A673 (cell line): ENCODE measurements at regions of chr18 and their contacts with region 1.

Region 1: GRCh38 chr18:24582771-24583170 is 122.3 kb downstream of the HRH4 start:
- DNase-seq: no peak
- H3K4me3 ChIP-seq: no peak overlapping the region
- H3K27ac ChIP-seq: no peak overlapping the region
- H3K4me1 ChIP-seq: no peaks in the 10 kb centered on the region
- H3K27me3 ChIP-seq: peaks cover 81% of the 10 kb centered on the region
- CTCF ChIP-seq: no peak

Region 2: DNA sequence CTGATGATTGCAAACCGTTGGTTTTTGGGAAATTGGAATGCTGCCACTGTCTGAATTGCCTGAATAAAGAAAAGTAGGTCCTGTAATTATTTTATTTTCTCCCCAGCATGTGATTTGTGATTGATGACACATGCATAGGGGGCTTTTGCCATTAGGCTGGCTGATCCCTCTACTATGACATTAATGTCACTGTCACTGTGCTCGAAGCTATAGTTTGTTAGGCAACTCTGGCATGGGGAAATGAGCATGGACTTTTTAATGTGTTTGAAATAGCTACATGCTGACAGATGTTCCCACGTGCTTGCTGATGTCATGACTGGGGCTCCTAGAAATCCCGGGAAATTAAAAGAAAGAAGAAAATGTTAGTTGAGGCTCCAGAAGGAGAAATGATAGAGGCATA is 23.2 kb before region 1 on chr18:
- CTCF ChIA-PET with region 1: no interaction called
- POLR2A ChIA-PET with region 1: no interaction called
- intact Hi-C with region 1: loop called (anchors 2 kb)
- DNase-seq: peak; percentile 40
- H3K4me3 ChIP-seq: no peak overlapping the region
- H3K27ac ChIP-seq: no peak overlapping the region
- H3K4me1 ChIP-seq: no peaks in the 10 kb centered on the region
- H3K27me3 ChIP-seq: peaks cover 14% of the 10 kb centered on the region
- CTCF ChIP-seq: no peak